ENCODE measurements at regions of chr9 and their contacts with region 1.

Region 1: DNA sequence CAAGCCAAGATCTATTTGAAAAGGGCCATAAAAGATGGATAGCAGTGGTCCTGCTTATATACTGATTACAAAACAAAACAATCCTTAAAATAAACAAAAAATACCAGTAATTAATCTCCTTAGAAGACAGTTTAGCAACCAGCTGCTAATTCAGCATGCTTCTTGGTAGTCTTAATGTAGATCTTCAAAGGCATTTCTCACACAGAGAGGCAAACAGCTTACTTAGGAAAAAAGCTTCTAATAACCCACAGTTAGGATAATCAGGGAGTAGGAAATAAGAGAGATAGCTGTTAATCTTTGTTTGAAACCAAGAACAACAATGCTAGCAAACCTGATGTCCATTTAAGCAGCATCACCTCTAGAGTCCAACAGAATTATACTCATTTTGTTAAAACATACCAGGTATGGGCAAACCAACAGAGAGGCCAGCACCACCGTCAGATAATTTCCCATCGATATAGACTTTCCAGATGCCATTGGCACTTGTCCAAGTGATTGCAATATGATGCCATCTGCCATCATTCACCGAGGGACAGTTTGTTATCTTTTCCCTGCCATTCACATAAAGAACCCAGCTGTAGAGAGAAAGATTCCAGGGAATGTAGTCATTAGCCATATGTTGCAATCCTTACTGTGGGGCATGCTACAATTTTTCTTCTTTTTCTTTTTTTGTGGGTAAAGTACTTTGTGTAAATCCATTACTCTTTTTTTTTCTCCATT is 105.6 kb upstream of the TXNDC8 start:
- DNase-seq: no peak
- H3K4me3 ChIP-seq: no peak overlapping the region
- H3K27ac ChIP-seq: no peak overlapping the region
- H3K4me1 ChIP-seq: no peaks in the 10 kb centered on the region
- H3K27me3 ChIP-seq: no peaks in the 10 kb centered on the region
- CTCF ChIP-seq: no peak
- POLR2A ChIP-seq: no peak

Region 2: GRCh38 chr9:110499608-110500007 is 56.3 kb after region 1 on chr9:
- intact Hi-C with region 1: no loop called
- DNase-seq: no peak
- H3K4me3 ChIP-seq: no peak overlapping the region
- H3K27ac ChIP-seq: no peak overlapping the region
- H3K4me1 ChIP-seq: no peaks in the 10 kb centered on the region
- H3K27me3 ChIP-seq: no peaks in the 10 kb centered on the region
- CTCF ChIP-seq: no peak
- POLR2A ChIP-seq: no peak

Region 3: DNA sequence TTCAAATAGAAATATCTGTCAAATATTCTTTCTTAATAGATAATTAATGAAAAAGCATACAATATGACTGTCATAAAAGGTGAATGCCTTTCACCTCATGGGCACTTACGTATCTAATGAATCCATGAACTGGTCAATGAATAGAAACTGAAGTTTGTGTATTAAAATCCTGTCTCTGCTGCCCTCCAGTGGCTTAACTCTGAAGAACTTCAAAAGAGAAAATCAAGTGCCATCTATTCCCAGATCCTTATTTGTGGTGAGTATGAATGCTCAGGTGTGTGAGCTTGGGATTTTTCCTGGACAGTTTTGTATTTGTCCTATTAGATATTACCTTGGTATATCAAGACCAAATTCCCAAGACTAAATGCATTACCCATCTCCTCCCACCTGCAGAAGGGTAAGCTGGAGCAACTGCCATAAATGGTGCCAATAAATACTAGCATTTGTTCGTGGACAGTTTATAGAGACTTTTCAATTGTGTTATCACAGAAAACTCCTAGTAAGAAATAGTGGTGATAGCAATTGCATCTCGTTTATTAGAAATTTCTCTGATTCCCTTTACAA is 180.2 kb after region 1 on chr9:
- intact Hi-C with region 1: loop called (anchors 10 kb)
- DNase-seq: peak; percentile 12 to 17
- H3K4me3 ChIP-seq: no peak overlapping the region
- H3K27ac ChIP-seq: no peak overlapping the region
- H3K4me1 ChIP-seq: peaks cover 0 to 6% of the 10 kb centered on the region in 2 donors
- H3K27me3 ChIP-seq: no peaks in the 10 kb centered on the region
- CTCF ChIP-seq: peak; percentile 46 to 78 (median 60)
- POLR2A ChIP-seq: no peak

Region 4: DNA sequence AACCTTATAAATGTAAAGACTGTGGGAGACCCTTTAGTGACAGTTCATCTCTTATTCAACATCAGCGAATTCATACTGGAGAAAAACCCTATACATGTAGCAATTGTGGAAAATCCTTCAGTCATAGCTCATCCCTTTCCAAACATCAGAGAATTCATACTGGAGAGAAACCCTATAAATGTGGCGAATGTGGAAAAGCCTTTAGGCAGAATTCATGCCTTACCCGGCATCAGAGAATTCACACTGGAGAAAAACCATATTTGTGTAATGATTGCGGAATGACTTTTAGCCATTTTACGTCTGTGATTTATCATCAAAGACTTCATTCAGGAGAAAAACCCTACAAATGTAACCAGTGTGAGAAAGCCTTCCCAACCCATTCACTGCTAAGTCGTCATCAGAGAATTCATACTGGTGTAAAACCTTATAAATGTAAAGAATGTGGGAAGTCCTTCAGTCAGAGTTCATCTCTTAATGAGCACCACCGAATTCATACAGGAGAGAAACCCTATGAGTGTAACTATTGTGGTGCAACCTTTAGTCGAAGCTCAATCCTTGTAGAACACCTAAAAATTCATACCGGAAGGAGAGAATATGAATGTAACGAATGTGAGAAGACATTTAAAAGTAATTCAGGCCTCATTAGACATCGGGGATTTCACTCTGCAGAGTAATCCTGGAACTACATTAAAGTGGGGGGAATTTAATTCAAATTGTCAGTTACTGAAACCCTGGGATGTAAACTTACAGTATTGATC is 1099.4 kb after region 1 on chr9:
- intact Hi-C with region 1: no loop called
- DNase-seq: no peak
- H3K4me3 ChIP-seq: no peak overlapping the region
- H3K27ac ChIP-seq: no peak overlapping the region
- H3K4me1 ChIP-seq: no peaks in the 10 kb centered on the region
- H3K27me3 ChIP-seq: no peaks in the 10 kb centered on the region
- CTCF ChIP-seq: no peak
- POLR2A ChIP-seq: no peak